Activated CD8-positive, alpha-beta T cell treated with anti-CD3 and anti-CD28 coated beads, Interleukin-2, amount 10 ng/mL, durations not matched to agents 7 days and 5 days (primary cell): ENCODE measurements at regions of chr17 and their contacts with region 1.

Region 1: GRCh38 chr17:2416010-2416734 is 15.3 kb upstream of the MNT start:
- DNase-seq: peak; percentile 88
- ATAC-seq: peak; percentile 81
- H3K4me3 Mint-ChIP-seq: no peak overlapping the region
- H3K27ac Mint-ChIP-seq: no peak overlapping the region
- H3K4me1 Mint-ChIP-seq: peaks cover 4% of the 10 kb centered on the region
- H3K27me3 Mint-ChIP-seq: no peaks in the 10 kb centered on the region

Region 2: GRCh38 chr17:2354311-2354710 is 61.9 kb before region 1 on chr17:
- CTCF ChIA-PET with region 1: interaction called, 21 read pairs
- POLR2A ChIA-PET with region 1: no interaction called
- DNase-seq: no peak
- ATAC-seq: no peak
- H3K4me3 Mint-ChIP-seq: no peak overlapping the region
- H3K27ac Mint-ChIP-seq: peak overlapping the region; percentile 96
- H3K4me1 Mint-ChIP-seq: peaks cover 19% of the 10 kb centered on the region
- H3K27me3 Mint-ChIP-seq: no peaks in the 10 kb centered on the region

Region 3: GRCh38 chr17:2380226-2380922 is 35.8 kb before region 1 on chr17:
- CTCF ChIA-PET with region 1: interaction called, 479 read pairs
- POLR2A ChIA-PET with region 1: interaction called, 30 read pairs
- DNase-seq: no peak
- ATAC-seq: no peak
- H3K4me3 Mint-ChIP-seq: no peak overlapping the region
- H3K27ac Mint-ChIP-seq: no peak overlapping the region
- H3K4me1 Mint-ChIP-seq: peaks cover 3% of the 10 kb centered on the region
- H3K27me3 Mint-ChIP-seq: no peaks in the 10 kb centered on the region

Region 4: GRCh38 chr17:2392252-2393173 is 23.7 kb before region 1 on chr17:
- CTCF ChIA-PET with region 1: interaction called, 63 read pairs
- POLR2A ChIA-PET with region 1: interaction called, 8 read pairs
- DNase-seq: peak; percentile 97
- ATAC-seq: peak; percentile 66
- H3K4me3 Mint-ChIP-seq: peak overlapping the region; percentile 87
- H3K27ac Mint-ChIP-seq: peak overlapping the region; percentile 95
- H3K4me1 Mint-ChIP-seq: peaks cover 72% of the 10 kb centered on the region
- H3K27me3 Mint-ChIP-seq: no peaks in the 10 kb centered on the region

Region 5: GRCh38 chr17:2427215-2427614 is 11.0 kb after region 1 on chr17:
- CTCF ChIA-PET with region 1: interaction called, 53 read pairs
- POLR2A ChIA-PET with region 1: no interaction called
- DNase-seq: no peak
- ATAC-seq: no peak
- H3K4me3 Mint-ChIP-seq: no peak overlapping the region
- H3K27ac Mint-ChIP-seq: no peak overlapping the region
- H3K4me1 Mint-ChIP-seq: no peaks in the 10 kb centered on the region
- H3K27me3 Mint-ChIP-seq: no peaks in the 10 kb centered on the region

Region 6: GRCh38 chr17:2482218-2482617 is 66.0 kb after region 1 on chr17:
- CTCF ChIA-PET with region 1: interaction called, 13 read pairs
- POLR2A ChIA-PET with region 1: interaction called, 3 read pairs
- DNase-seq: no peak
- ATAC-seq: peak; percentile 27
- H3K4me3 Mint-ChIP-seq: no peak overlapping the region
- H3K27ac Mint-ChIP-seq: peak overlapping the region; percentile 5
- H3K4me1 Mint-ChIP-seq: peaks cover 13% of the 10 kb centered on the region
- H3K27me3 Mint-ChIP-seq: no peaks in the 10 kb centered on the region